ENCODE measurements at regions of chr15 and their contacts with region 1.

Region 1: DNA sequence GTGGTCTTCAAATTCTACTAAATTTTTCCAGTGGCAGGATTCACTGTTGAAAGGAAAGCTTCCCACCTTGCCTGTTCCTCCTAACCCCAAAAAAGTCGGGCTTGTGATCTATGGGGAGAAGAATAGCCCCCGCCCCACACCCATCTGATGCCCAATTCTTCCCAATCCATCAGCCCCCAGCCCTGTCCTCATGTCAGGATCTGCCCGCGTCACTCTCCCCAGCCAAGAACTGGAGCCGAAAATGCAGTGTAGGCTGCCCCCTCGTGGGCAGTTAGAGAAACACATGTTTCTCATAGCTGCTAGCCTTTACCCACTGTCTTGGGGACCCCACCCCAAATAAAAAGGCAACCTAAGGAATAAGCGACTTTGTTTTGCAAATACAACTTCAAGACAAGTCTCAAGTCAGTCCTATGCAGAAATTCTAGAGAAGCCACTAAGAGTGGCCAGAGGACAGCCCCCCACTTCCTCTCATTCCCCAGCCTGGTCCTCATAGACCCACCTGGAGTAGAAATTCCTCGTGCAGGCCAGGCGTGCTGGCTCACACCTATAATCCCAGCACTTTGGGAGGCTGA is 13.0 kb upstream of the CSK start:
- DNase-seq: peak; percentile 81
- H3K4me3 Mint-ChIP-seq: no peak overlapping the region
- H3K27ac Mint-ChIP-seq: peak overlapping the region; percentile 28
- H3K4me1 Mint-ChIP-seq: peaks cover 9% of the 10 kb centered on the region
- H3K27me3 Mint-ChIP-seq: peaks cover 26% of the 10 kb centered on the region
- CTCF ChIP-seq: peak; percentile 84

Region 2: GRCh38 chr15:74373731-74374647 is 394.9 kb before region 1 on chr15:
- CTCF ChIA-PET with region 1: interaction called, 4 read pairs
- intact Hi-C with region 1: loop called (anchors 2 kb)
- DNase-seq: peak; percentile 98
- H3K4me3 Mint-ChIP-seq: peak overlapping the region; percentile 81
- H3K27ac Mint-ChIP-seq: no peak overlapping the region
- H3K4me1 Mint-ChIP-seq: peaks cover 20% of the 10 kb centered on the region
- H3K27me3 Mint-ChIP-seq: peaks cover 46% of the 10 kb centered on the region
- CTCF ChIP-seq: peak; percentile 88

Region 3: DNA sequence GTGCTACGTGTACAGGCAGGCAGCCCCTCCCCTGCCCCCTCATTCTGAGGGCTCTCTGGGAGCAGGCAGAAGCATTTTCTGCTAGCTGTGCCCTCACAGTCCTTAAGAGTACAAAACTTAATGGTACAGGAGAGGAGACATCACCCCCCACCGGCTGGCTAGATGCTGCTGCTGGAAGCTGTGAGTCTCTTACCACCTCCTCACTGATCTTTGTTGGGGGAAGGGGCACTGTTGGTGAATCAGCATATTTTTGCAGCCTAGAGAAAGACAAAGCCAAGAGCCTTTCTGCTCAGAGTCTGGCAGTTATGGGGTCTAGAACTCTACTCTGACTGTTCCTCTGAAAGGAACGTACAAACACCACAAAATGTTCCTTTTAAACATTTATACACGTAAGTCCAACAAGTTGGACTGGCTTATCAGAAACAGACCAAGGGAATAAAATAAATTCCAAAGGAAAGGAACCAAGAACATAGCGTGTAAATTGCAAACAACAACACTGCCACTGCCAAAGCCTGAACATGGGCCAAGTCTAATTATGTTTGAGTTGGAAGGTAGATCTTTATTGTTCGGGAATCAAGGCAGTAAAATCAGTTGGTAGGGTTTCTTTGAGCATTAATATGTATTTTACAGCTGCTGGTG is 126.0 kb before region 1 on chr15:
- CTCF ChIA-PET with region 1: interaction called, 107 read pairs
- intact Hi-C with region 1: loop called (anchors 2 kb)
- DNase-seq: peak; percentile 38
- H3K4me3 Mint-ChIP-seq: peak overlapping the region; percentile 33
- H3K27ac Mint-ChIP-seq: peak overlapping the region; percentile 46
- H3K4me1 Mint-ChIP-seq: peaks cover 29% of the 10 kb centered on the region
- H3K27me3 Mint-ChIP-seq: no peaks in the 10 kb centered on the region
- CTCF ChIP-seq: no peak

Region 4: GRCh38 chr15:74682954-74683353 is 85.9 kb before region 1 on chr15:
- CTCF ChIA-PET with region 1: no interaction called
- intact Hi-C with region 1: no loop called
- DNase-seq: no peak
- H3K4me3 Mint-ChIP-seq: no peak overlapping the region
- H3K27ac Mint-ChIP-seq: no peak overlapping the region
- H3K4me1 Mint-ChIP-seq: no peaks in the 10 kb centered on the region
- H3K27me3 Mint-ChIP-seq: no peaks in the 10 kb centered on the region
- CTCF ChIP-seq: no peak

Region 5: DNA sequence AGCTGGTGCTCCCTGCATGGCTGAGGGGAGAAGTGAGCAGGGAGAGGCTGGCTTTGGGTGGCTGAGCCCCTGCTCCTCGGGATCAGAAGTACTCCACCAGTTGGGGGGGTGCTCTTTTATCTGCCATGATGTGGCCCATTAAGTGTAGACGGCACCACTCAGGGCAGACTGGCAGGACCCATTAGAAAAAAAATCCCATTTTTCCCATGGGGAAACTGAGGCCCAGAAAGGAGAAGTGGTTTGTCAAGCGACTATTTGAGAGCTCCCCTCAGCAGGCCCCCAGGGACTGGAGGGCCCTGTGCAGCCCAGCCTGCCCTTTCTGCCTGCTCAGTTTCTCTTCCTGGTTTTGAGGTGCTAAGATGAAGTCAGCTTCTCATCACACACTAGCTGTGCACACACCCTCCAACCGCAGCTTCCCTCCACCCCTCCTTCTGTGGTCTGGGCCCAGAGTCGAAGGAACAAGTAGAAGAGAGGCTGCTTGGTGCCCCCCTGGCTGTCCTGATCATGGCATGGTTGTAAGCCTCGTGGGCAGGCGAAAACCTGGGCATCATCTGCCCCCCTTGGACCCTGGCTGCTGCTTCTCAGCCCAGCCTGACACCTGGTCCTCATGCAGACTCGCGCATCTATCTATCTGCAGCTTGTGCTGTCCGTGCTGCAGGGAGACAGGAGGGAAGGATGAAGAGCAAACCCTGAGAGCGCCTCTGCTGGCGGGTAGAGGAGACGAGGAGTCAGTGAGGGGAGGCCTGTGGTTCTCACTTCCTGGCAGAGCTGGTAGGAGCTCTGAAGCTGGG is 18.6 kb after region 1 on chr15:
- CTCF ChIA-PET with region 1: interaction called, 10 read pairs
- intact Hi-C with region 1: no loop called
- DNase-seq: peak; percentile 54
- H3K4me3 Mint-ChIP-seq: no peak overlapping the region
- H3K27ac Mint-ChIP-seq: peak overlapping the region; percentile 14
- H3K4me1 Mint-ChIP-seq: peaks cover 60% of the 10 kb centered on the region
- H3K27me3 Mint-ChIP-seq: no peaks in the 10 kb centered on the region
- CTCF ChIP-seq: peak; percentile 46

Region 6: GRCh38 chr15:74835307-74835823 is 66.5 kb after region 1 on chr15:
- CTCF ChIA-PET with region 1: interaction called, 5 read pairs
- intact Hi-C with region 1: loop called (anchors 1 kb)
- DNase-seq: peak; percentile 92
- H3K4me3 Mint-ChIP-seq: no peak overlapping the region
- H3K27ac Mint-ChIP-seq: peak overlapping the region; percentile 4
- H3K4me1 Mint-ChIP-seq: peaks cover 16% of the 10 kb centered on the region
- H3K27me3 Mint-ChIP-seq: peaks cover 7% of the 10 kb centered on the region
- CTCF ChIP-seq: peak; percentile 87

Region 7: DNA sequence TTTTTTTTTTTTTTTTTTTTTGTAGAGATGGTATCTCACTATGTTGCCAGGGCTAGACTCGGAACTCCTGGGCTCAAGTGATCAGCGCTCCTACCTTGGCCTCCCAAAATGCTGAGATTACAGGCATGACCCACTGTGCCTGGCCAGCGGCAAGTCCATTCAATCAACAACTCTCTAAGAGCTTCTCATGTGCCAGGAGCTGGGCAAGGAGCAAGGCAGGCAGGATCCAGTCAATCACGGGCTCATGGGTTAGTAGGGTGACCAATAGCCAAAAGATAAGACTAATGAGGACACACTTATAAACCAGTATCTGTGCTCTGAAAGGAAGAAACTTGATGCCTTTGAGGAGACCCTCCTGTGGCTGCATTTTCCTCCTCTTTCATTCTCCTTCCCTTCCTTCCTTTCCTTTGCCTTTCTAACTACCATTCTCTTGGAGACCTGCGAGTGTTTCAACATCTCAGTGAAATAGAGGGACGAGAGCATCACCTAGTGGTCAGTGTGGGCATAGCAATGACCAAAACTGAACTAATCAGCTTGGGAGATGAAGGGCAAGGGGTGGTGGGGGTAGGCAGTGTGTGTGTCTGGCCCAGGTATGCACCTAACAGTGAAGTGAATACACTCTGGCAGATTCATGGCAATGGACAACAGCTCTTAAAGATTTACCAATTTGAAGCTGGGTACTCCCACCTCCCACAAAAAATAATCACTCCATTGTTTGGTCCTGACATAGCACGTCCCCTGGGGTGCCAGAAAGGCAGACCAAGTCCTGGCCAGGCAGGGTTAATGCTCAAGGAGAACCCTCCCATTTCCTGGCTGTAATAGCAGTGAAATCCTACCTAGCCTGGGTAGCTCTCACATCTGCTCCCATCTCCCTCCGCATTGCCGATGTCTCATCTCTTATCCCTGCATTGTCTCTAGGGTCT is 181.5 kb after region 1 on chr15:
- CTCF ChIA-PET with region 1: interaction called, 41 read pairs
- intact Hi-C with region 1: loop called (anchors 1 kb)
- DNase-seq: peak; percentile 87
- H3K4me3 Mint-ChIP-seq: no peak overlapping the region
- H3K27ac Mint-ChIP-seq: no peak overlapping the region
- H3K4me1 Mint-ChIP-seq: peaks cover 17% of the 10 kb centered on the region
- H3K27me3 Mint-ChIP-seq: no peaks in the 10 kb centered on the region
- CTCF ChIP-seq: peak; percentile 96

Measured in Calu3 (cell line).